T-cell (primary cell): ENCODE measurements at regions of chr12 and their contacts with region 1.

Region 1: GRCh38 chr12:100101000-100101399 is 41.7 kb downstream of the BLTP3B start:
- DNase-seq: no peak
- ATAC-seq: no peak
- H3K4me3 ChIP-seq: no peak overlapping the region
- H3K4me3 Mint-ChIP-seq: no peak overlapping the region
- H3K27ac ChIP-seq: no peak overlapping the region
- H3K27ac Mint-ChIP-seq: no peak overlapping the region
- H3K4me1 ChIP-seq: no peaks in the 10 kb centered on the region
- H3K4me1 Mint-ChIP-seq: peaks cover 0 to 1% (median under 1%) of the 10 kb centered on the region in 3 donors
- H3K27me3 ChIP-seq: no peaks in the 10 kb centered on the region
- H3K27me3 Mint-ChIP-seq: no peaks in the 10 kb centered on the region

Region 2: GRCh38 chr12:99984271-99985128 is 116.5 kb before region 1 on chr12 and contains the start of gene ANKS1B:
- CTCF ChIA-PET with region 1: no interaction called
- POLR2A ChIA-PET with region 1: no interaction called
- DNase-seq: no peak
- ATAC-seq: peak in 1 of 4 experiments; percentile 23
- H3K4me3 ChIP-seq: peak within 1 kb of the TSS in 1 of 2 donors; percentile 55
- H3K4me3 Mint-ChIP-seq: peak within 1 kb of the TSS; percentile 28 to 70 (median 31)
- H3K27ac ChIP-seq: no peak within 1 kb of the TSS
- H3K27ac Mint-ChIP-seq: no peak within 1 kb of the TSS
- H3K4me1 ChIP-seq: peaks cover 0 to 4% of the 10 kb centered on the region in 2 experiments
- H3K4me1 Mint-ChIP-seq: peaks cover 12 to 14% (median 12%) of the 10 kb centered on the region in 3 donors
- H3K27me3 ChIP-seq: peaks cover 12 to 14% of the 10 kb centered on the region in 2 experiments
- H3K27me3 Mint-ChIP-seq: peaks cover 45 to 54% of the 10 kb centered on the region in 2 donors
- total RNA-seq, gene ANKS1B: 0.18 to 0.47 (median 0.19) TPM in 3 of 5 donors, not detected in the others

Region 3: GRCh38 chr12:100114574-100114973 is 13.6 kb after region 1 on chr12:
- CTCF ChIA-PET with region 1: interaction called in 1 of 2 experiments, 3 read pairs
- POLR2A ChIA-PET with region 1: interaction called in 1 of 2 experiments, 12 read pairs
- DNase-seq: no peak
- ATAC-seq: no peak
- H3K4me3 ChIP-seq: no peak overlapping the region
- H3K4me3 Mint-ChIP-seq: no peak overlapping the region
- H3K27ac ChIP-seq: no peak overlapping the region
- H3K27ac Mint-ChIP-seq: no peak overlapping the region
- H3K4me1 ChIP-seq: no peaks in the 10 kb centered on the region
- H3K4me1 Mint-ChIP-seq: peaks cover 18 to 21% (median 18%) of the 10 kb centered on the region in 3 donors
- H3K27me3 ChIP-seq: no peaks in the 10 kb centered on the region
- H3K27me3 Mint-ChIP-seq: no peaks in the 10 kb centered on the region

Region 4: DNA sequence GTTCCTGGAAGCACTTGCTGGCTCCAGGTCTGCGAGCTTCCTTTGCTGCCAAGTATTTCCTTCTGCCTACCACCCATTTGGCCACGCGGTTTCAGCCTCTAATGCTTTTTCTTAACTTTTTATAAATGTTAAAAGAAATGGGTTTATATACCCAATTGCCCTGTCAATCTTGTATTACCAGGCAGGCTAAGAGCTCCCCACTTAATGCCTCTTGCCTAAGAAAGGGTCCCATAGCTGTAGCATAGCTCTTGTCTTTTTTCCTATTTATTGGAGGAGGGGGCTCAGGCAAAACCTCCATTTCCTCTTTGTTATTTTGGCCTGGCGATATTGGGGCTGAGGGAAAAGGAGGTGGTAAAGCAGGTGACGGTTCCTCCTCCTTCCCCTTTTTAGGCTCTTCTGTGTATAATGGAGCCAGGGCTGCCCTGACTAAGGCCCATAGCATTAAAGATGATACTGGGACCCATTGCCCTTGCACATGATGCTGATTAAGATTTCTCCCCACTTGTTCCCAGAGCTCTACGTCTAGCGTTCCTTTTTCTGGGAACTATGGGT is 63.2 kb after region 1 on chr12:
- CTCF ChIA-PET with region 1: no interaction called
- POLR2A ChIA-PET with region 1: no interaction called
- DNase-seq: no peak
- ATAC-seq: peak in 1 of 4 experiments; percentile 6
- H3K4me3 ChIP-seq: peak overlapping the region in 1 of 2 donors; percentile 32
- H3K4me3 Mint-ChIP-seq: peak overlapping the region in 2 of 3 donors; percentile 57 to 62
- H3K27ac ChIP-seq: no peak overlapping the region
- H3K27ac Mint-ChIP-seq: no peak overlapping the region
- H3K4me1 ChIP-seq: peaks cover 0 to 5% of the 10 kb centered on the region in 2 experiments
- H3K4me1 Mint-ChIP-seq: peaks cover 10 to 12% (median 11%) of the 10 kb centered on the region in 3 donors
- H3K27me3 ChIP-seq: no peaks in the 10 kb centered on the region
- H3K27me3 Mint-ChIP-seq: no peaks in the 10 kb centered on the region